ENCODE measurements at regions of chr1 and their contacts with region 1.

Region 1: DNA sequence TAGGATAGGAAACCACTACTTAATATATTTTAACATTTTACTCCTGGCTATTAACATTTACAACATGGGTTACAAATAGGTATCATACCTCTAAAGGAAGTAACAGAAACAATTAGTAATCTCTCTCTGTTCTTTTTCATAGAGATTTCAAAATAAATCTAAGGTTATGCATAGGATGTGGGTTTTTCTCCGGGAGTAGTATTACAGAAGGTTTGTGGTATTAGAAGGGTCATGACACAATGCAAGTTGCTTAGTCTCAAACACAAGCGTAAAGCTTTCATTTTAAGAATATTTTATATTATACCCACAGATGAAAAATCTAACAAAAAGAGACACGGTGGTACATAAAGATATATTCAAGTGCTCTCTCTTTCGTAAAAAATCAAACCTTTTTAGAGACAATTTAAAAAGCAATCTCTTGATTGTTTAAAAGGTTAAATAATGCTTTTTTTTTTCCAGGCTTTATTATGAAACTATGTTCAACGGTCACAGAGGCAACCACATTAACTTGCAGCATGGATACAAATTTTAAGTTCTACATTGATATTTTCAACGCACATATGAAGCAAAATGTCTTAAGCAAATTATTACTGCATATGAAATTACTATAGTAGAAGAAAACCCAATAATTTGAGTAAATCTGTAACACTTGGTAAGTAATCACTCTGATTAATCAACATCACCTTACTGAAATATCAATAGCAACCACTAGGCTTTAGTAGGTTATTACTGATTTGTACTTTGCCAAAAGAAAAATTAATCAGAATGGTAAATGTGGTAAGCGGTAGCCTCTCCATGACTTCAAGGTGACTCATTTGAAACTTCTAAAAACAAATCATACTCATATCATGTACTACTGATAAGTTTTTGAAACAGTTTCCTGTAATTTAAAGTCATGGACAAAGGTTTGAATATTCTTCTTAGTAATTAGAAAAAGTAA is 97.4 kb upstream of the GFI1 start:
- DNase-seq: peak; percentile 82
- ATAC-seq: peak; percentile 72
- H3K4me3 ChIP-seq: no peak overlapping the region
- H3K27ac ChIP-seq: no peak overlapping the region
- H3K4me1 ChIP-seq: peaks cover 6% of the 10 kb centered on the region
- H3K27me3 ChIP-seq: no peaks in the 10 kb centered on the region
- CTCF ChIP-seq: peak; percentile 24; the same call in 1 of the 2 replicates
- POLR2A ChIP-seq: no peak
- RAD21 ChIP-seq: no peak

Region 2: DNA sequence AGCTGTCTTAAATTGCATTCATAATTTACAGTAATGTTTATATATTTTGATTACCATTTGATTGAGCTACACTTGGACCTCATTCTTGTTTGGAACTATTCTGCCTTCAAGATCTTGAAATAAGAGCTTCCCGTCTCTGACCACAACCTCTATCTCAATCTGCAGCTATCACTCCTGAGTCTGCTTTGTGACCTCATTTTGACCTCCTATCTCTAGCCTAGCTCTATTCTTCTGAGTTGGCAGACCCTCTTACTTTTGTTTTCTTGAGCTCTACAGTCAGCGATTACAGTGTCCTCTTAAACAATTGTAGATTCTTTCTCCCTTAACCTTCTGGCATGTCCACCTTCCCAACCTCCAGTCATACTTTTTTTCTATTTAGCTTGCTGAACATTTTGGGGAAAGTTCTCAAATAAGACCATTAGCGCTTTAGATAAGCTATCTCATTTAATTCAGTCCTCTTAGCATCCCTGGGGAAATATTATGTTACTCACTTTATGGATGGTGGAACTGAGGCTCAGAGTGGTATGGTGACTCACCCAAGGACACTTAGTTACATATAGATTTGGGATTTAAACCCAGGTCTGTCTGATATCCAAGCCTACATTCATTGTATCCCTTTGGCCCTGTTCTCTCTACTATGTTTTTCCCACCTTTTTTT is 266.1 kb before region 1 on chr1:
- CTCF ChIA-PET with region 1: no interaction called
- POLR2A ChIA-PET with region 1: no interaction called
- dilution Hi-C with region 1: no loop called
- in situ Hi-C with region 1: no loop called
- intact Hi-C with region 1: no loop called
- DNase-seq: no peak
- ATAC-seq: no peak
- H3K4me3 ChIP-seq: no peak overlapping the region
- H3K27ac ChIP-seq: no peak overlapping the region
- H3K4me1 ChIP-seq: no peaks in the 10 kb centered on the region
- H3K27me3 ChIP-seq: no peaks in the 10 kb centered on the region
- CTCF ChIP-seq: no peak
- POLR2A ChIP-seq: no peak
- RAD21 ChIP-seq: no peak

Region 3: DNA sequence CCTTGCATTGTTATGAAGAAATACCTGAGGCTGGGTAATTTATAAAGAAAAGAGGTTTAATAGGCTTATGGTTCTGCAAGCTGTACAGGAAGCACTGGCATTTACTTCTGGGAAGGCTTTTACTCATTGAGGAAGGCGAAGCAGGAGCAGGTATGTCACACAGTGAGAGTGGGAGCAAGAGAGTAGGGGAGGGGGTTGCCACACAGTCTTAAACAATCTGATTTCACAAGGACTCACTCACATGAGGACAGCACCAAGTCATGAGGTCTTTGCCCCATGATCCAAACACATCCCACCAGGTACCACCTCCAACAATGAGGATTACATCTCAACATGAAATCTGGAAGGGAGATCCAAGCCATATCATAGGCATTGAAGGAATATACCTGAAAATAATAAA is 73.6 kb after region 1 on chr1:
- CTCF ChIA-PET with region 1: no interaction called
- POLR2A ChIA-PET with region 1: no interaction called
- dilution Hi-C with region 1: no loop called
- in situ Hi-C with region 1: no loop called
- intact Hi-C with region 1: loop called (anchors 2 kb)
- DNase-seq: no peak
- ATAC-seq: no peak
- H3K4me3 ChIP-seq: no peak overlapping the region
- H3K27ac ChIP-seq: no peak overlapping the region
- H3K4me1 ChIP-seq: no peaks in the 10 kb centered on the region
- H3K27me3 ChIP-seq: no peaks in the 10 kb centered on the region
- CTCF ChIP-seq: no peak
- POLR2A ChIP-seq: no peak
- RAD21 ChIP-seq: no peak